ENCODE measurements at regions of chr2 and their contacts with region 1.

Region 1: DNA sequence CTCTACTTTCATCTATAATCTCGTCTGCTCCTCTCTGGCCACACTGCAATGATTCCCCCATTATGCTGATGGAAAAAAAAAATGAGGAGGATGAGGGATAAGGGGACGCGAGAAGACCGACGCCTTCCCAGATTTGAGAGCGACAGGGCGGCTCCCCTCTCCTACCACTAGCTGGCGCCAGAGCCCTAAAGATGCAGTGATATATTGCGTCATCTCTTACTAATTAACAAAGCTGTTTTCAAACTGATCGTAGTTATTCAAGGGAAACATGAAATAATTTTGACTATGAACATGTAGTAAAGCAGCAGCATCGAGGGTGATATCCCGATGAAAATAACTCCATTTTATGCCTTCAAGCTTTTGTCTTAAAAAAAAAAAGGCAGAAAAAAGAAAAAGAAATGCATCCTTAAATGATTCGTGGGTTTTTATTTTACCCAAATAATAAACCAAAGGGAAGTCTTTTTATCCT is 48.0 kb upstream of the HNRNPA3 start:
- DNase-seq: peak; percentile 50 to 89 (median 73)
- ATAC-seq: peak; percentile 71 to 83 (median 80)
- H3K4me3 ChIP-seq: peak overlapping the region; percentile 2 to 31
- H3K4me3 Mint-ChIP-seq: no peak overlapping the region
- H3K27ac ChIP-seq: peak overlapping the region; percentile 47
- H3K27ac Mint-ChIP-seq: no peak overlapping the region
- H3K4me1 ChIP-seq: peaks cover 13 to 16% of the 10 kb centered on the region in 2 experiments
- H3K4me1 Mint-ChIP-seq: peaks cover 12 to 21% (median 20%) of the 10 kb centered on the region in 3 donors
- H3K27me3 ChIP-seq: no peaks in the 10 kb centered on the region
- H3K27me3 Mint-ChIP-seq: peaks cover 0 to 2% of the 10 kb centered on the region in 2 donors

Region 2: DNA sequence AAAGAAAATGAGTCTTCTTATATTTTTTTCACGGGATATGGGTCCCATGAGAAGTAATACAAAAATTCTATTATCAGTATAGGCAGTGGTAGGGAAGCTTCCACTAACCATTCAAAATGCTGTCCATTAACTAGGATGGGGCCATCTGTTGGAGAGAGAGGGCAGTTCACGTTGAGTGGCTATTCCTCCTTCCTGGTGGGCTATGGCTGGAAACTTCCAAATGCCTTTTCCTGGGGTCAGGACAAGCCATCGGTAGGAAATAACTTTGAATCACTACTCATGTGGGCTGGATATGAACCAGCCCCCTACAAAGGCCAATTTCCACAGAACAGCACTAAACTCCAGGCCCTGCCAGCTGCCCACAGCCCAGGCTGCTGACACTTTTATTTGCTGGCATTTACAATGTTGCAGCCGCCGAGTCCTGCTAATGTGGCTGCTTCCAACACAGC is 108.1 kb before region 1 on chr2:
- CTCF ChIA-PET with region 1: no interaction called
- POLR2A ChIA-PET with region 1: no interaction called
- DNase-seq: no peak
- ATAC-seq: no peak
- H3K4me3 ChIP-seq: no peak overlapping the region
- H3K4me3 Mint-ChIP-seq: no peak overlapping the region
- H3K27ac ChIP-seq: no peak overlapping the region
- H3K27ac Mint-ChIP-seq: no peak overlapping the region
- H3K4me1 ChIP-seq: no peaks in the 10 kb centered on the region
- H3K4me1 Mint-ChIP-seq: no peaks in the 10 kb centered on the region
- H3K27me3 ChIP-seq: no peaks in the 10 kb centered on the region
- H3K27me3 Mint-ChIP-seq: no peaks in the 10 kb centered on the region

Region 3: DNA sequence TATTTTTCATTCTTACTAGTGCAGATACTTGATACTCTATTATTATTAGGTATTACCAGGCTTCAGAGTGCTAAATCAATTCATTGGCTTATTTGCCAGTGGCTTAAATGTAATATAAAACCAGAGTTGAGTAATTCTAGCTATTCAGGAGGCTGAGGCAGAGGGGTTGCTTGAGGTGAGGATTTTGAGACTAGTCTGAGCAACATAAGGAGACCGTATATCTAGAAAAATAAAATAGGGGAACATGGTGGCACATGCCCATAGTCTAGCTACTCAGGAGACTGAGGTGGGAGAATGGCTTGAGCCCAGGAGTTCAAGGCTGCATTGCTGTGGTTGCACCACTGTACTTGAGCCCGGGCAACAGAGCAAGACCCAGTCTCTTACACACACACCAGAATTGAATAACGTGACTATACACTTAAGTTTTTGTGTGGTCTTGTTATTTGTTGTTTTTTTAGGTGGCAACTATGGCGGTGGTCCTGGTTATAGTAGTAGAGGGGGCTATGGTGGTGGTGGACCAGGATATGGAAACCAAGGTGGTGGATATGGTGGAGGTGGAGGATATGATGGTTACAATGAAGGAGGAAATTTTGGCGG is 52.7 kb after region 1 on chr2:
- CTCF ChIA-PET with region 1: interaction called, 4 to 18 read pairs
- POLR2A ChIA-PET with region 1: no interaction called
- DNase-seq: no peak
- ATAC-seq: no peak
- H3K4me3 ChIP-seq: no peak overlapping the region
- H3K4me3 Mint-ChIP-seq: no peak overlapping the region
- H3K27ac ChIP-seq: peak overlapping the region; percentile 25
- H3K27ac Mint-ChIP-seq: peak overlapping the region; percentile 6 to 61
- H3K4me1 ChIP-seq: peaks cover 19 to 28% of the 10 kb centered on the region in 2 experiments
- H3K4me1 Mint-ChIP-seq: peaks cover 72 to 75% (median 75%) of the 10 kb centered on the region in 3 donors
- H3K27me3 ChIP-seq: no peaks in the 10 kb centered on the region
- H3K27me3 Mint-ChIP-seq: no peaks in the 10 kb centered on the region

Region 4: DNA sequence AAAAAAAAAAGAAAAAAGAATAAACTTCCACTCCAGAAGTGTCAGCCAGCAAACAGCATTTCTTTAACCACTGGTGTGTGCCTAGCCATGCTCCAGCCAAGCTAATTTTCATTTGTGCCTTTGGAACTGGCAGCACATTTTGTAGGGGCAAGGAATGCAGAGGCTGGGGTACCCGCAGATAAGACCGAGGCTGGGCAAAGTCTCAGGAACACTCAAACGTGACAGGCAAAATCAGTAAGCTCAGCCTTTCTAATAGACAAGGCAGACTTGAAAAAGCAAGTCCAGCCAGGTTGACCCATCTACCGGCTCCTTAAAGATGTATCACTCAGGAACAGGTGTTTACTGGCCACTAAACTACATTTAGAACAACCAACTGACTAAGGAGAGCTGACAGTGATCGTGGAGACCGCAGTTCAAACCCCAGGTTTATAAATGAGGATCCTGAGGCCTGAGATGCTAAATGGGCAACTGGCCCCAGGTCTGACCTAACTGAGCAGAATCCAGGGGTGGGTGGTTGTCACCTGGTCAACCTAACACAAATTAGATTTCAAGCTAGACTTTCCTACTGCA is 83.2 kb after region 1 on chr2:
- CTCF ChIA-PET with region 1: interaction called in 1 of 2 experiments, 4 read pairs
- POLR2A ChIA-PET with region 1: interaction called in 1 of 2 experiments, 11 read pairs
- DNase-seq: no peak
- ATAC-seq: no peak
- H3K4me3 ChIP-seq: no peak overlapping the region
- H3K4me3 Mint-ChIP-seq: no peak overlapping the region
- H3K27ac ChIP-seq: no peak overlapping the region
- H3K27ac Mint-ChIP-seq: peak overlapping the region in 1 of 2 donors; percentile 8
- H3K4me1 ChIP-seq: peaks cover 17 to 61% of the 10 kb centered on the region in 2 experiments
- H3K4me1 Mint-ChIP-seq: peaks cover 85 to 87% (median 86%) of the 10 kb centered on the region in 3 donors
- H3K27me3 ChIP-seq: no peaks in the 10 kb centered on the region
- H3K27me3 Mint-ChIP-seq: no peaks in the 10 kb centered on the region

Region 5: GRCh38 chr2:177314194-177314593 is 149.6 kb after region 1 on chr2:
- CTCF ChIA-PET with region 1: interaction called, 4 to 10 read pairs
- POLR2A ChIA-PET with region 1: no interaction called
- DNase-seq: no peak
- ATAC-seq: no peak
- H3K4me3 ChIP-seq: no peak overlapping the region
- H3K4me3 Mint-ChIP-seq: no peak overlapping the region
- H3K27ac ChIP-seq: no peak overlapping the region
- H3K27ac Mint-ChIP-seq: peak overlapping the region; percentile 59 to 97
- H3K4me1 ChIP-seq: peaks cover 5 to 20% of the 10 kb centered on the region in 2 experiments
- H3K4me1 Mint-ChIP-seq: peaks cover 22 to 42% (median 28%) of the 10 kb centered on the region in 3 donors
- H3K27me3 ChIP-seq: no peaks in the 10 kb centered on the region
- H3K27me3 Mint-ChIP-seq: no peaks in the 10 kb centered on the region

Region 6: DNA sequence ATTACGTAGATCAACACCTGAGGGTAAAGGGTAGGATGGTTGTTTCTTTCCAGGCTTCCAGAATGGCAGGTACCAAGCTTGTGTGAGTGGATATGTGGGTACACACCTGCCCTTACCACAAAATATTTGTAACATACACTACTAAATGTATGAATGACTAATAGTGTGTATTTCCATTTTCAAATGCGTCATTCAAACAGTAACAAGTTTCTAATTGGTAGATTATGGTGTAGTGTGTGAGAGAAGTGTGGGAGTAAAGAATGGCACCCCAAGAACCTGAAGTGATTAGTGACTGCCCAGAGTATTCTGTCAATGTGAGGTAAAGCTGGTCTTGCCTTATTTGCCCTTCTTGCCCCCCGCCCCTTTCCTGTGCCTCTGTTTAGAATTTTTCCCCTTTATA is 249.1 kb after region 1 on chr2:
- CTCF ChIA-PET with region 1: interaction called, 8 to 95 read pairs
- POLR2A ChIA-PET with region 1: no interaction called
- DNase-seq: no peak
- ATAC-seq: no peak
- H3K4me3 ChIP-seq: no peak overlapping the region
- H3K4me3 Mint-ChIP-seq: no peak overlapping the region
- H3K27ac ChIP-seq: no peak overlapping the region
- H3K27ac Mint-ChIP-seq: peak overlapping the region in 1 of 2 donors; percentile 58
- H3K4me1 ChIP-seq: no peaks in the 10 kb centered on the region
- H3K4me1 Mint-ChIP-seq: peaks cover 37 to 42% (median 38%) of the 10 kb centered on the region in 3 donors
- H3K27me3 ChIP-seq: no peaks in the 10 kb centered on the region
- H3K27me3 Mint-ChIP-seq: no peaks in the 10 kb centered on the region

Region 7: GRCh38 chr2:177763532-177764265 is 599.1 kb after region 1 on chr2:
- CTCF ChIA-PET with region 1: interaction called, 4 to 10 read pairs
- POLR2A ChIA-PET with region 1: no interaction called
- DNase-seq: peak; percentile 43 to 83 (median 70)
- ATAC-seq: peak; percentile 85 to 96 (median 92)
- H3K4me3 ChIP-seq: no peak overlapping the region
- H3K4me3 Mint-ChIP-seq: peak overlapping the region in 1 of 3 donors; percentile 44
- H3K27ac ChIP-seq: no peak overlapping the region
- H3K27ac Mint-ChIP-seq: peak overlapping the region in 1 of 2 donors; percentile 19
- H3K4me1 ChIP-seq: peaks cover 0 to 4% of the 10 kb centered on the region in 2 experiments
- H3K4me1 Mint-ChIP-seq: peaks cover 3 to 10% (median 5%) of the 10 kb centered on the region in 3 donors
- H3K27me3 ChIP-seq: peaks cover 0 to 16% of the 10 kb centered on the region in 2 experiments
- H3K27me3 Mint-ChIP-seq: peaks cover 25 to 26% of the 10 kb centered on the region in 2 donors

Measured in T-cell (primary cell).